ENCODE measurements at regions of chr6 and their contacts with region 1.

Region 1: DNA sequence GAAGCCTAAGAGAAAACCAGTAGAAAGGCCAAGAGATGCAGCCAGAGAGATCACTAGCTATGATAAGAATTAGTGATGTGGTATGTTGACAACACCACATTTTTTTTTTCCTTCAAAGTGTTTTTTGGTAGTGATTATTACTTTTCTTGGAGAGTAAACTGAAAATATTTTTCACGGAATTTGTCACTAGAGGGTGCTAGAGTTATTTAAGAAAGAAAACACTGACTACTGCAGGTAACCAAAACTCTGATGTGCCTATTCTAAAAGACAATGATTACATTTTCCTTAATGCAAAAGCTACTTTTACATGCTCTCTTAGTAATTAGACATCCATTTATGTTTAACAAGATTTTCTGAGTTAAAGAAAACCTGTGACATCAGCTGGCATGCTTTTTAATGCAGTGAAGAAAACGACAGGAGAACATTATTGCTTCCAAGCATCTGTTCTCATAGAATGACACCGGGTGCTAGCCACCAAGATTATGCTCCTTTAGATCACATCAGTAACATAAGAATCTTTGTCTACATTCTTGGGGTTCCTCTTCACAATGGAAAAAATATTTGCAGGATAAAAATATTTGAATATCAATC is 28.8 kb downstream of the RWDD2A start:
- H3K4me3 ChIP-seq: no peak overlapping the region
- H3K27ac ChIP-seq: no peak overlapping the region
- H3K4me1 ChIP-seq: no peaks in the 10 kb centered on the region
- CTCF ChIP-seq: peak; percentile 48; the same call in 1 of the 2 replicates

Region 2: GRCh38 chr6:83192871-83193746 is 28.9 kb before region 1 on chr6 and contains the starts of genes PGM3 and RWDD2A:
- CTCF ChIA-PET with region 1: interaction called, 11 read pairs
- POLR2A ChIA-PET with region 1: no interaction called
- H3K4me3 ChIP-seq: peak within 1 kb of the TSS; percentile 94
- H3K27ac ChIP-seq: peak within 1 kb of the TSS; percentile 76; the same call in 1 of the 2 replicates
- H3K4me1 ChIP-seq: peaks cover 2% of the 10 kb centered on the region; the same call in 1 of the 2 replicates
- CTCF ChIP-seq: peak; percentile 52

Region 3: GRCh38 chr6:83252717-83253116 is 30.7 kb after region 1 on chr6:
- CTCF ChIA-PET with region 1: interaction called, 12 read pairs
- POLR2A ChIA-PET with region 1: no interaction called
- H3K4me3 ChIP-seq: no peak overlapping the region
- H3K27ac ChIP-seq: no peak overlapping the region
- H3K4me1 ChIP-seq: no peaks in the 10 kb centered on the region
- CTCF ChIP-seq: no peak

Region 4: GRCh38 chr6:83359638-83360037 is 137.7 kb after region 1 on chr6:
- CTCF ChIA-PET with region 1: no interaction called
- POLR2A ChIA-PET with region 1: no interaction called
- H3K4me3 ChIP-seq: no peak overlapping the region
- H3K27ac ChIP-seq: no peak overlapping the region
- H3K4me1 ChIP-seq: no peaks in the 10 kb centered on the region
- CTCF ChIP-seq: no peak

Region 5: DNA sequence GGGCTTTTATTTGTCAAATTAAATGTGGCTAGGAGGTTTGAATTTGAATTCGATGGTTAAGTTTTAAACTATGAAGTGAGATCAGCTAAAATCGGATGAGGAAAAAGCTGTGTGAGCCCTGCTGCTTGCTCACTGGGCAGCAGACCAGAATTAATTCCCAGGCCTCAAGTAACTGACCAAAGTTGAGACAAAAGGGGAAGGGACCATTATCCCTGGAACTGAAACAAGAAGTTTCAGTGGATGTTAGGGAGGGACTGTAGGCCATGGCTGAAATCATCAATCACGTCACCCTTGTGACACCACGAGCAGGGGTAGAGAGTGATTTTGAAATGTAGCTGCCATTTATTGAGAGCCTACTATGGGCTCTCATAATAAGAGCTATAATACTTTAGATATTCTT is 283.4 kb after region 1 on chr6:
- CTCF ChIA-PET with region 1: interaction called, 248 read pairs
- POLR2A ChIA-PET with region 1: no interaction called
- H3K4me3 ChIP-seq: no peak overlapping the region
- H3K27ac ChIP-seq: no peak overlapping the region
- H3K4me1 ChIP-seq: no peaks in the 10 kb centered on the region
- CTCF ChIP-seq: no peak

Region 6: DNA sequence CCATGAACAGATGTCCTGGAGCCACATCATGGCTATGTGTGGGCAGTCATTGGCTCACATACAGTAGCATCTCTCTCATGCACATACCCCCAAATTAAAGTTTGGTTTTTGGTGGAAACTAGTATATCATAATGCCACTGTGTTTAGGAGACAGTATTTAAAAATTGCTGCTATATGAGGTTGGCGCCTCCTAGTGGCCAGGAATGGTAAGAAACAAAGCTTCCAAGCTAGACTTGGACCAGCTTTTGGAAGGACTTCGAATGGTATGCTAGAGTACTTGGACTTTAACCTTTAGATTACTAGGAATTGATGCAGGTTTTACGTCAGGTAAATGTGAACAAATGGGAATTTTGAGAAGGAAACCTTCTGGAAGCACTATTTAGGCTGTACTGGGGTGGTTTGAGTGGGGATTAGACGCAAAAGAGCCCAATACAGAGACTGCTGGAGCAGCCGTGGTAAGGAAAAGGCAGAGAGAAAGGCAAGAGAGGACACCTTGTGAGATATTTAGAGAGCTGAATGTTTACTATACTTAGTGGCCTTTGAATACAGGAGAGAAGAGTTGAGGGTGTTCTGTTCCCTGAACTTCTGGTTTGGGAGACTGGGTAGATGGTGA is 314.2 kb after region 1 on chr6:
- CTCF ChIA-PET with region 1: interaction called, 12 read pairs
- POLR2A ChIA-PET with region 1: no interaction called
- H3K4me3 ChIP-seq: no peak overlapping the region
- H3K27ac ChIP-seq: no peak overlapping the region
- H3K4me1 ChIP-seq: no peaks in the 10 kb centered on the region
- CTCF ChIP-seq: 0 out of 2 replicates have a peak, but pooled peaks have one; percentile 39

Measured in HEK293 (cell line).